AG04450 (cell line): ENCODE measurements at regions of chr1 and their contacts with region 1.

Region 1: DNA sequence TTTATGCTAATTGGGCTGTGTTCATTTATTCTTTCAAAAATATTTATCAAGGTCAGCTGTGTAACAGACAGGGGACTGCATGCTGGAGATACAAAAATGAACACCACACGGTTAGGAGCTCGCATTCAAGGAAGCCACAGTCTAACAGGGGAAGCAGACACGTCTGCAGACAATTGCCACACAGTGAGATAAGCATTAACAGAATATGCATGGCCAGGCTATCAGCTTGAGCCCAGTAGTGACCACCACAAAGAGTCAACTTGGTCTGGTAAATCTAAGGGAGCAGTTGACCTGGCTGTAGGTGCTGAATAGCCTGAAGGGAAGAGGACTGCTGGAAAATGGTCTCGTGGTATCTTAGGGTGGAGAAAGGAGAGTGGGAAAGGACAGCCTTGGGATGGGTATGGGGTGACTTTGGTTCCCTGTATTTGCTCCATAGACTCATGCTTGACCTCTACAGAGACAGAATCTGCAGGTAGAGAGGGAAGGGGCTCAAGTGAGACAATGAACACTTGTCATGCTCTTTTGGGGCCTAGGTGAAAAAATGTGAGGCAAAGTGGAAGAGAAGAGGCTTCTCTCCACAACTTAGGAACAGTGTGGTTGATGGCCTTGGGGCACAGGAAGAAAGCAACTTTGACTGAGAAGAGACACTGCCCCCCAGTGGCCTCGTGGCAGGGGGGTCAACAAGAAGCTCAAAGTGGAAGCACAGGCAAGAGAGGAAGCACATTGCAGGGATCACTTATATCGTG is 7.6 kb upstream of the NPL start:
- DNase-seq: no peak
- H3K4me3 ChIP-seq: no peak overlapping the region
- H3K27ac ChIP-seq: no peak overlapping the region
- H3K27me3 ChIP-seq: peaks cover 5% of the 10 kb centered on the region
- CTCF ChIP-seq: peak; percentile 59

Region 2: GRCh38 chr1:182588500-182589452 is 193.2 kb before region 1 on chr1 and contains the start of gene RNASEL:
- CTCF ChIA-PET with region 1: interaction called, 552 read pairs
- POLR2A ChIA-PET with region 1: no interaction called
- DNase-seq: peak; percentile 6
- H3K4me3 ChIP-seq: peak within 1 kb of the TSS; percentile 77
- H3K27ac ChIP-seq: peak within 1 kb of the TSS; percentile 91
- H3K27me3 ChIP-seq: peaks cover 9% of the 10 kb centered on the region
- CTCF ChIP-seq: no peak
- polyA plus RNA-seq, gene RNASEL: 4.9 and 6.2 TPM in 2 replicates

Region 3: GRCh38 chr1:182604169-182605164 is 177.5 kb before region 1 on chr1 and contains the start of gene RGS16:
- CTCF ChIA-PET with region 1: interaction called, 552 read pairs
- POLR2A ChIA-PET with region 1: interaction called, 5 read pairs
- DNase-seq: peak; percentile 21
- H3K4me3 ChIP-seq: peak within 1 kb of the TSS; percentile 58
- H3K27ac ChIP-seq: no peak within 1 kb of the TSS
- H3K27me3 ChIP-seq: peaks cover 26% of the 10 kb centered on the region
- CTCF ChIP-seq: no peak
- polyA plus RNA-seq, gene RGS16: 0.10 and 0.11 TPM in 2 replicates

Region 4: GRCh38 chr1:182614796-182615454 is 167.1 kb before region 1 on chr1:
- CTCF ChIA-PET with region 1: interaction called, 18 read pairs
- POLR2A ChIA-PET with region 1: no interaction called
- DNase-seq: peak; percentile 44
- H3K4me3 ChIP-seq: peak overlapping the region; percentile 57
- H3K27ac ChIP-seq: peak overlapping the region; percentile 77
- H3K27me3 ChIP-seq: peaks cover 19% of the 10 kb centered on the region
- CTCF ChIP-seq: no peak

Region 5: DNA sequence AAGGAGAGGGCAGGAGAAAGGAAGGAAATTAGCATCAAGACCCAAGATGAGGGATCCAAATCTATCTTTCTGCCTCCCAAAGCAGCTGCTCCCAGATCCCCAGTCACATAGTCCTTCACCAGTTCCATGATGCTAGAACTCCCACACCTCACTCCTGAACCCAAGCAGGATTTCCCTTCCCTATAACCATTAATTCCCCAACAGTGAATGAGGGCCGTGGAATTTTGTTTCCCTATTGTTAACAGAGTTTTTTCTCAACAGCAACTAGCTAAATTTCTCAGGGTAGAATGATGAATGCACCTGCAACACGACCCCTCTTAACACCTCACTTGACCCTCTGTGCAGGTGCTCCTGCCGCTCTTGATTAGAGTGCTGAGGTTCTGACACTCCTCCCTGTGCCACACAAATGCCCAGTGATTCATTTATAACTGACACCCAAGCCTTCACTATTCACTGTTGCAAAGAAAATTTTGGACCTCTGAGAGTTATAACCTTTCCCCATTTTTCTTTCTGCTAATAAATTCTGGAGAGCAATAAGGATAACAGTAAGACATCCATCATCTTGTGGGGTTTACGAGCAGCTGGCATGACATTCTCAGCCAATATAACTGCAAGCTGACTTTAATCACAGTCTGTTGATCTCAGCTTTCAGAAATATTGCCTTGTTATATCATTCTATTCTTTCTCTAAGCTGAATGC is 17.8 kb before region 1 on chr1:
- CTCF ChIA-PET with region 1: interaction called, 13 read pairs
- POLR2A ChIA-PET with region 1: no interaction called
- DNase-seq: no peak
- H3K4me3 ChIP-seq: no peak overlapping the region
- H3K27ac ChIP-seq: no peak overlapping the region
- H3K27me3 ChIP-seq: peaks cover 4% of the 10 kb centered on the region
- CTCF ChIP-seq: no peak

Region 6: DNA sequence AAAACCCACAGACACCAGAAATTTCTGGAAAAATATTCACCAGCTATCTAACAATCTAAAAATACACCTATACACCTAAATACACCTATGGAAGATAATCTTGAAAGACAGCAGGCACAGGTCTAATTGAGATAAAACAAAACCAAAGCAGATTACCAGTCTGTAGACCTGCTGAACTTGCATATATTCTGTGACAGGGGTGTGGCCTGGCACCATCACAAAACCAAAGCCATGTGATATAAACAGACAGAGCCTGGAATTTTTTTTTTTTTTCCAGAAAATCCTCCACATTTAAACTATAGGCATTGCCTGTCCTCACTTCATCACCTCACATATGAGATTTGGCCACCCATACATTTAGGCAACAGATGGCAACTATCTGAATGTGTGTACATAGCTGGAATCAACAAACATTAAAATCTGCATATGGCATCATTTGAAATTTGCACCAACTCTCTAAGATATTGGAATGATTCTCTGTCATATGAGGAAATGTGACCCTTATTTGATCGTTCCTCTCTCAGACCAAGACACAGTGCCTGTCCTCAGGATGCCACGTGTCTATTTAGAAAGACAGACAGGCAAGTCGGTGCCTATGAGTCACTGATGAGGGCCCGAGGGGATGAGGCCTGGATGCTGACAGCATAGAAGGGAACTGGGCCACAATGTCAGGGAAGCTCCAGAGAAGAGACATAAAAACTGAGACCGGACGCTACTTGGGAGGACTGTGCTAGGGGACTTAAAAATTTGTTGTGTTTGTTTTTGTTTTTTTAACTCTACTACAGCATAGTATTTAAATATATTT is 603.5 kb after region 1 on chr1:
- CTCF ChIA-PET with region 1: no interaction called
- POLR2A ChIA-PET with region 1: no interaction called
- DNase-seq: no peak
- H3K4me3 ChIP-seq: no peak overlapping the region
- H3K27ac ChIP-seq: no peak overlapping the region
- H3K27me3 ChIP-seq: peaks cover 10% of the 10 kb centered on the region
- CTCF ChIP-seq: no peak